Common myeloid progenitor, CD34-positive (primary cell): ENCODE measurements at regions of chr2 and their contacts with region 1.

Region 1: DNA sequence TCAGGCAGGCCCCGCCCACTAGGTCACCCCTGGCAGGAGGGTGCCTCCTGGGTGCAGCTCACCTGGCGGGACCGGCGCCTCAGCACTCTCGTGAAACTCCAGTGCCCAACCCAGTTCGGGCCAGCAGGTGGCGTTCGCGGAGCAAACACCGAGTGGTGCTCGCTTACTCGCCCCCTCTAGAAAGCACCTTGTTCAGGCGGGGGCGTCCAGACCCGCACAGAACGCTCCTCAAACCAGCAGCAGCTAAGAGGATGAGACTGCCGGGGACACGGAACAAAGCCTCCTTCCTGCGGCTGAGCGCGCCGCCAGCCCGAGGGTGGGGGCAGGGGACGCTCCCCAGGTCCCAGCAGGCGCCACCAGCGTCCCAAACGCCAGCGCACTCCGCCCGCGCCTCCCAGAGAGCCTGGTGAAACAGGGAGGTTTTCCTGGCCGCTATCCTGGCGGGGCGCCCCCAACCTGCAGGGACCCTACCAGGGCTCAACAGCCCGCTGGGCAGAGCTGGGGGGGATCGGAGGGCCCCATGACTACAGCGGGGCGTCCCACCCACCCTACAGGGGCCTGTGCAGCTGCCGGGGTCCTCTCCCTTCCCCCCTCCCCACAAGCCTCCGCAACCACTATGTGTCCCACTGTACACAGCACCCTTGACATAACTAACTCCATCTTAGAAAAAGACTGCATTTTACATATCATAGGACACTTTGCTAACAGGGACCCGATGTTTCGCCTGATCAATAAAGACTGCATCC is 44.7 kb downstream of the MRPS5 start:
- DNase-seq: peak; percentile 54 to 82 (median 79)
- H3K4me3 ChIP-seq: peak overlapping the region; percentile 19 to 79 (median 69)
- H3K27ac ChIP-seq: no peak overlapping the region
- H3K4me1 ChIP-seq: peaks cover 0 to 38% (median 33%) of the 10 kb centered on the region in 4 experiments
- H3K27me3 ChIP-seq: peaks cover 0 to 11% (median 3%) of the 10 kb centered on the region in 5 experiments

Region 2: DNA sequence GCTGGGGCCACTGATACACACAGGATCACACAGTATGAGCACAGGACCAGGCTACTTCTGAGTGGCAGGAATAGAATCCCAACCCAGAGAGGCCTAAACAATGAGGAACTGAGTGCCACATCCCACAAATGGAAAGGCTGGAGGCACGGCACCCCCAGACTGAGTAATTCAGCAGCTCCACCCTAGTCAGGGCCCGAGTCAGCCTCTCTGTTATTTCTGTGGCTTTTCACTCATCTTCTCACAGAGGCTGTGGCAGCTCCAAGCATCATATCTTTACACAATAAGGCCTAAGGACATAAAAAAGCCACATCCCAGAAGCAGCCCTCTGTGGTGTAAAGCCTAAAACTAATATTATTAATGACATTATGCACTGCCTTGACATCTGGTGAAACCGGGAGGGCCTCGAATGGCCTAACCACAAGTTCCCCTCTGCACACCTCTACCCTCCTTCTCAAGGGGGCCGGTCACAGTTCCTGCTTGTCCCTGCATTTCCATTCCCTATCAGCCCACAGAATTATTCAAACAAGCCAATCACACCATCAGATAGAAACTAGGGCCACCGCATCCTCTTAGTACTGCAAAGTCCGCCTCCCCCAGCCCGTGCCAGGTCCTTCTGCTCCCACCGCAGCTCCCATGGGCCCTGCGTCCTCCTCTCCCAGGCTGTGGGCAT is 63.9 kb before region 1 on chr2:
- CTCF ChIA-PET with region 1: interaction called, 19 read pairs
- POLR2A ChIA-PET with region 1: interaction called, 3 read pairs
- DNase-seq: peak in 2 of 3 donors; percentile 80 to 85
- H3K4me3 ChIP-seq: no peak overlapping the region
- H3K27ac ChIP-seq: no peak overlapping the region
- H3K4me1 ChIP-seq: peaks cover 3 to 37% (median 24%) of the 10 kb centered on the region in 4 experiments
- H3K27me3 ChIP-seq: no peaks in the 10 kb centered on the region

Region 3: DNA sequence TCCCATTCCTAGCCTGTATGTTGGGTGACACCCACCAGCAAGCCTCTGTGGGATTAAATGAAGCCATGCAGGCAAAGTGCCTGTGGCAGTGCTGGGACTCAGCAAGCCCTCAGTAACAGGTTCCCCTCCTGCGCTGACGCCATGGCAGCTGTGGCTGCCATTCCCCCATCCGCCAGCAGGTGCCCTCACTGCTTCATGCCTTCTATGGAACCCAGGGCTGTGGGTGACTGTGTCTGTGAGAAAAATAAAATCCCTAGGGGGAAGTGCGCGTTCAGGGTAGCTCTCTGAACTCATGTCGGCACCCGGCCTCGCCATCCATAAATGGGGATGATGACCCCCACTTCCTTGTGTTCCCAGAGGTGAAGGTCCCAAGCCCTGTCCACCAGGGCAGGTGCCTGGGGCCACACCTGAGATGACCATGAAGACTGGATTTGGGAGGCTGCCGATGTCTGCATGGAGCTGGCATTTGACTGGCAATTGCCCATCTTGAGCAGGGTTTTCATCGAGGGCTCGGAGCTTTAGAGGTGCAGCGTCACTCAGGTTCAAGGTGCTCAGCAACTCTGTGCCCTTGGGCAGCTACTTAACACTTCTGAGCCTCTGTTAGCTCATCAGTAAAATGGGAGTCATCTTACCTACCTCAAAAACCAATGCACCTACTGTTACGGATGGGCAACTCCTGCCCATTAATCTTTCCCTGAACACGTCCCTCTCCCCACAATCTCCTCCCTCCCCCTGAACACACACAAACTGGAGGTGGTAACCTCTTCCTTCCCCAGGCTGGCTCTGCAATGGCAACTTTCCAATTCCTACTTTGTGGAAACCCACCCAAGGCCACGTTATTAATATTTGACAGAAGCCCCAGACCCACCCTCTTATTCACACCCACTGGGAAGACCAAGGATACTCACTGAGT is 54.4 kb before region 1 on chr2:
- CTCF ChIA-PET with region 1: interaction called, 52 read pairs
- POLR2A ChIA-PET with region 1: no interaction called
- DNase-seq: peak; percentile 77 to 92 (median 89)
- H3K4me3 ChIP-seq: peak overlapping the region in 1 of 7 experiments; percentile 35
- H3K27ac ChIP-seq: no peak overlapping the region
- H3K4me1 ChIP-seq: peaks cover 0 to 29% (median 25%) of the 10 kb centered on the region in 4 experiments
- H3K27me3 ChIP-seq: peaks cover 0 to 49% (median 21%) of the 10 kb centered on the region in 5 experiments

Region 4: DNA sequence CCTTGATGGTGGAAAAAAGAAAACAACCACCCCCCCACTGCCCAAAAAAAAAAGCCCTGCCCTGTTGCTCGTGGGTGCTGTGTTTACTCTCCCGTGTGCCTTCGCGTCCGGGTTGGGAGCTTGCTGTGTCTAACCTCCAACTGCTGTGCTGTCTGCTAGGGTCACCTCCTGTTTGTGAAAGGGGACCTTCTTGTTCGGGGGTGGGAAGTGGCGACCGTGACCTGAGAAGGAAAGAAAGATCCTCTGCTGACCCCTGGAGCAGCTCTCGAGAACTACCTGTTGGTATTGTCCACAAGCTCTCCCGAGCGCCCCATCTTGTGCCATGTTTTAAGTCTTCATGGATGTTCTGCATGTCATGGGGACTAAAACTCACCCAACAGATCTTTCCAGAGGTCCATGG is 23.4 kb before region 1 on chr2:
- CTCF ChIA-PET with region 1: interaction called, 46 read pairs
- POLR2A ChIA-PET with region 1: interaction called, 3 read pairs
- DNase-seq: peak; percentile 28 to 56 (median 54)
- H3K4me3 ChIP-seq: peak overlapping the region in 1 of 7 experiments; percentile 49
- H3K27ac ChIP-seq: no peak overlapping the region
- H3K4me1 ChIP-seq: peaks cover 0 to 4% (median 2%) of the 10 kb centered on the region in 4 experiments
- H3K27me3 ChIP-seq: peaks cover 0 to 12% (median 0%) of the 10 kb centered on the region in 5 experiments

Region 5: DNA sequence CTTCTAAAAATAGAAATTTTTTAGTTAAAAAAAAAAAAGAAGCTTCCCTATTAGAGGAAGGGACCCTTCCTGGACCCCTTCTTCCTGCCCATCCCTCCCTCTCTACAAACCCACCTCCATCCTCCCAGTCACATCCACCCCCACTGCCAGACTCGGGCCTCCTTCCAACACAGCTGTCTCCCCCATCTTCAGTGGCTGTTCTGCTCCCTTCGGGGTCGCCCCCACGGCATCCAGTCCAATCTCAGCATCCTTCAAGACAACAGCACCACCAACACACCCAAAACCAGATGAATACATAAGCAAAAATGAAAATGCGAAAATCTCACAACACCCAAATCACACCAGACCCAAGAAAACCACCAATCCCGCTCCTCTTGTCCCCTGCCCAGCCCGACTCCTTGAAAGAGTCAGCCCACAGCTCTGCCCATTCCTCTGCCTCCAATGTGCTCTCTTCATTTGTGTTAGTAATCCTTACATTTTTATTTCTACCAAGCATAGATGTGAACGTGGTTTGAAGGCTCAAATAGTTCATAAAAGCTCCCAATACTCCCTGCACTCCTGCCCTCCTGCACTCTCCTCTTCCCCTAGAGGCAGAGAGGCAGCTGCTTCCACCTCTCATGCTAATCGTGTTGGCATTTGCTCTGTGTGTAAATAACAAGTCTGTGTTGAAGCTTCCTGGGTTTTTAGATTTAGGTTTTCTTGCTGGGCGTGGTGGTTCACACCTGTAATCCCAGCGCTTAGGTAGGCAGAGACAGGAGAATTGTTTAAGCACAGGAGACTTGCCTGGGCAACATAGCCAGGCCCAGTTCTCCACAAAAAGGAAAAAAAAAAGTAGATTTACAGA is 14.5 kb before region 1 on chr2:
- CTCF ChIA-PET with region 1: interaction called, 21 read pairs
- POLR2A ChIA-PET with region 1: no interaction called
- DNase-seq: no peak
- H3K4me3 ChIP-seq: no peak overlapping the region
- H3K27ac ChIP-seq: no peak overlapping the region
- H3K4me1 ChIP-seq: no peaks in the 10 kb centered on the region
- H3K27me3 ChIP-seq: no peaks in the 10 kb centered on the region

Region 6: DNA sequence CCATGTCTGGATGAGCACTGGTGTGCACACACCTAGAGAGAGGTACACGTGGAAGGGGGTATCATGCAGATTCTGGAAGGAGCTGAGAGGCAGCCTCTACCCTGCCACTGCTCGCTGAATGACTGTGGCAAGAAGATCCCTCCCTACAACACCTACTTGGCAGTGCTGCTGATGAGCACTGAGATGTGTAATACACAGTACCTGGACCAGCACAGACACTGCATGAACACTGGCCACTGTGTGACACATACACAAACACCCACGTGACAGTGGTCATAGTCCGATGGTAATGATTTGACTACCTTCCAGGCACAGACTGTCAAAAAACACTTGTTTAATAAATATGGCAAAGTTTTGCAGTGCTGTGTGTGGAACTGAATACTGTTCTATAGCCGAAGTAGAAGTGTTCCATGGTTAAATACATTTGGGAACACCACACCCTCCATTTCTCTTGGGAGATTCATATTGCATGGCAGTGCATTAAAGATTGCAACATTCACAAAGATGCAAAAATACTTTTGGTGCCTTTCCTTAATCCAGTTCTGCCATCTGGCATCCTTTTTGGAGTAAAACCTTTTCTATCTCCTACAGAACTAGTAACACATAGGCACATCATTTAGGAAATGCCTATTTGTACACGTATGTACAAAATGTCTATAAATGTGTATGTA is 15.1 kb after region 1 on chr2:
- CTCF ChIA-PET with region 1: interaction called, 14 read pairs
- POLR2A ChIA-PET with region 1: no interaction called
- DNase-seq: no peak
- H3K4me3 ChIP-seq: no peak overlapping the region
- H3K27ac ChIP-seq: no peak overlapping the region
- H3K4me1 ChIP-seq: no peaks in the 10 kb centered on the region
- H3K27me3 ChIP-seq: no peaks in the 10 kb centered on the region

Region 7: DNA sequence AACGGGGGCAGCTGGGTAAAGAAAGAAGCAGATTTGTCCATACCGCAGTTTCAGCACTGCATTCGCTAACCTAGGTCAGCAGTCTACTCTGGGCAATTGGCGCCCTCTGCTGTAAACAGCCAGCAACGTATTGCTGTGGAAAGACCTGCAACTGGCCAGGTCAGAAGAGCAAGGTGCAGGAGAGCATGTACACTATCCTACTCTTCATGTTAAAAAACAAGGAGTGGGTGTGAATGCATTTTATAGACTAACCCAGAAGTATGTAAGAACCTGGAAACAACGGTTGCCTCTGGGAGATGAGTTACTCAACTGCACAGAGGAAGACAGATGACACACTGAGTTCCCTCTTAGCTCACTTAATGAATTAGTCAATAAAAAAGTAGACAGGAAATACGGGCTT is 38.5 kb after region 1 on chr2:
- CTCF ChIA-PET with region 1: interaction called, 16 read pairs
- POLR2A ChIA-PET with region 1: no interaction called
- DNase-seq: peak; percentile 67 to 81 (median 79)
- H3K4me3 ChIP-seq: no peak overlapping the region
- H3K27ac ChIP-seq: no peak overlapping the region
- H3K4me1 ChIP-seq: peaks cover 0 to 13% (median 8%) of the 10 kb centered on the region in 4 experiments
- H3K27me3 ChIP-seq: no peaks in the 10 kb centered on the region

Region 8: GRCh38 chr2:95185197-95185596 is 108.2 kb after region 1 on chr2:
- CTCF ChIA-PET with region 1: no interaction called
- POLR2A ChIA-PET with region 1: no interaction called
- DNase-seq: no peak
- H3K4me3 ChIP-seq: no peak overlapping the region
- H3K27ac ChIP-seq: no peak overlapping the region
- H3K4me1 ChIP-seq: no peaks in the 10 kb centered on the region
- H3K27me3 ChIP-seq: peaks cover 0 to 3% (median 0%) of the 10 kb centered on the region in 5 experiments